CD8-positive, alpha-beta memory T cell (primary cell): ENCODE measurements at regions of chr17 and their contacts with region 1.

Region 1: GRCh38 chr17:81188491-81188840 is 22.4 kb upstream of the AATK start:
- DNase-seq: no peak
- H3K4me3 ChIP-seq: no peak overlapping the region
- H3K4me3 Mint-ChIP-seq: no peak overlapping the region
- H3K27ac ChIP-seq: no peak overlapping the region
- H3K27ac Mint-ChIP-seq: no peak overlapping the region
- H3K4me1 ChIP-seq: no peaks in the 10 kb centered on the region
- H3K4me1 Mint-ChIP-seq: no peaks in the 10 kb centered on the region
- H3K27me3 ChIP-seq: no peaks in the 10 kb centered on the region
- H3K27me3 Mint-ChIP-seq: peaks cover 0 to 8% of the 10 kb centered on the region in 2 donors

Region 2: GRCh38 chr17:80477647-80478478 is 710.6 kb before region 1 on chr17:
- CTCF ChIA-PET with region 1: no interaction called
- POLR2A ChIA-PET with region 1: interaction called, 10 read pairs
- DNase-seq: peak in 1 of 5 donors; percentile 23
- H3K4me3 ChIP-seq: no peak overlapping the region
- H3K4me3 Mint-ChIP-seq: no peak overlapping the region
- H3K27ac ChIP-seq: no peak overlapping the region
- H3K27ac Mint-ChIP-seq: no peak overlapping the region
- H3K4me1 ChIP-seq: peaks cover 23% of the 10 kb centered on the region
- H3K4me1 Mint-ChIP-seq: peaks cover 12 to 21% (median 12%) of the 10 kb centered on the region in 3 donors
- H3K27me3 ChIP-seq: peaks cover 34% of the 10 kb centered on the region
- H3K27me3 Mint-ChIP-seq: peaks cover 50 to 64% of the 10 kb centered on the region in 2 donors